Activated naive CD4-positive, alpha-beta T cell treated with anti-CD3 and anti-CD28 coated beads for 36 hours (primary cell): ENCODE measurements at regions of chr2 and their contacts with region 1.

Region 1: DNA sequence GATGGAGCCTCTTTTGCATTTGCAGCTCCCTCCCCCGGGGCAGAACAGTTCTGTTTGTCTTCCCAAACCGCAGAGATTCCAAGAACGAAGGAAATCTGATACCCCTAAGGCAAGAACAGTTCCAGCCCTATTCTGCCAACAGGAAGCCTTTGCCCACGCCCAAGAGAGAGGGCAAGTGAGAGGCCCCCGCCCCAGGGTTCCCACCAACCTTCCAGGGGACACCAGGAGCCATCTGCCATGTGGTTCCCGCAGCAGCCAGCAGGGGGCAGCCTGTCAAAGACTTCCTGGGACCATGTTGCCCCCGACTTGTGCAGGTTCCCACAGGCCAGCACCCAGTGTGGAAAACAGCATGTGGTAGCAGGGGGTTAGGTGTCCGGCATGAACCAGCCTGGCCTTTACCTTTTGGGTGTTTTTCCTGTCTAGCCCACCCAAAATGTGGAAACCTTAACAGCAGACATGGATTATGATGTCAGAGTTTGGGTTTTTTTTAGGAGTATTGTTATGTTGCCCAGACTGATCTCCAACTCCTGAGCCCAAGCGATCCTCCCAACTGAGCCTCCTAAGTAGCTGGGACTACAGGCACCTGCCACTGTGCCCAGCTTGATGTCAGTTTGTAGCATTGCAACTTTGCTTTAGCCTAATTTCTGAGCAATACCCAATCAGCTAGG is 21.7 kb upstream of the EFHD1 start:
- DNase-seq: peak; percentile 79
- H3K4me3 Mint-ChIP-seq: no peak overlapping the region
- H3K27ac Mint-ChIP-seq: no peak overlapping the region
- H3K4me1 Mint-ChIP-seq: no peaks in the 10 kb centered on the region
- H3K27me3 Mint-ChIP-seq: no peaks in the 10 kb centered on the region

Region 2: GRCh38 chr2:232204457-232204931 is 407.2 kb before region 1 on chr2:
- CTCF ChIA-PET with region 1: no interaction called
- intact Hi-C with region 1: no loop called
- DNase-seq: no peak
- H3K4me3 Mint-ChIP-seq: no peak overlapping the region
- H3K27ac Mint-ChIP-seq: no peak overlapping the region
- H3K4me1 Mint-ChIP-seq: no peaks in the 10 kb centered on the region
- H3K27me3 Mint-ChIP-seq: no peaks in the 10 kb centered on the region

Region 3: DNA sequence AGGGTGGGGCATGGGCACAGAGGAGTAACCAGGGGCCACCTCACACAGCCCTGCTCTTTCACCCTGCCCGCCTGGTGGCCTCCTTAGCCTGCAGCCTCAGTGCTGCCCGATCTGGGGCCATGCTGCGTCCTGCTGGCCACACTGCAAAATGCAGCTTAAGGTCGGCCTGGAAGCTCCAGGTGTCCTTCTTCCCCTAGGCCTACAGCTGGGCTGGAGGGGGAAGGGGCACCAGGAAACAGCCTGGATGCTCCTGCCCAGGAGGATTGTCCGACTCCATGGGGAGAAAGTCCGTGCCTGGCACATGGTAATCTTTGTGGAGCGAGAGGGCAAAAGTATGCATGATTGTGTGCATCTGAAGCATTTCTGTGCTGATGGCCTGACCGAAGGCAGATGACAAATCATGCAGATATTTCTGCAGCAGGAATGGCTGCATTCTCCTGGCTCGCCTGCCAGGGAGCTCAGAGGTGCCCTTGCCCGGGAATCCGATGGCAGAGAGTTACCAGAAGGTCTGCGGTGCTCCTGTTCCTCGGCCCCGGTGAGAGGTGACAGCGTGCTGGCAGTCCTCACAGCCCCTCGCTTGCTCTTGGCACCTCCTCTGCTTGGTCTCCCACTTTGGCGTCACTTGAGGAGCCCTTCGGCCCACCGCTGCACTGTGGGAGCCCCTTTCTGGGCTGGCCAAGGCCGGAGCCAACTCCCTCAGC is 245.9 kb before region 1 on chr2:
- CTCF ChIA-PET with region 1: no interaction called
- intact Hi-C with region 1: no loop called
- DNase-seq: peak; percentile 23
- H3K4me3 Mint-ChIP-seq: no peak overlapping the region
- H3K27ac Mint-ChIP-seq: no peak overlapping the region
- H3K4me1 Mint-ChIP-seq: peaks cover 24% of the 10 kb centered on the region
- H3K27me3 Mint-ChIP-seq: no peaks in the 10 kb centered on the region

Region 4: GRCh38 chr2:232668805-232669444 is 57.2 kb after region 1 on chr2:
- CTCF ChIA-PET with region 1: interaction called, 4 read pairs
- intact Hi-C with region 1: loop called (anchors 2 kb)
- DNase-seq: peak; percentile 15
- H3K4me3 Mint-ChIP-seq: no peak overlapping the region
- H3K27ac Mint-ChIP-seq: no peak overlapping the region
- H3K4me1 Mint-ChIP-seq: no peaks in the 10 kb centered on the region
- H3K27me3 Mint-ChIP-seq: no peaks in the 10 kb centered on the region

Region 5: DNA sequence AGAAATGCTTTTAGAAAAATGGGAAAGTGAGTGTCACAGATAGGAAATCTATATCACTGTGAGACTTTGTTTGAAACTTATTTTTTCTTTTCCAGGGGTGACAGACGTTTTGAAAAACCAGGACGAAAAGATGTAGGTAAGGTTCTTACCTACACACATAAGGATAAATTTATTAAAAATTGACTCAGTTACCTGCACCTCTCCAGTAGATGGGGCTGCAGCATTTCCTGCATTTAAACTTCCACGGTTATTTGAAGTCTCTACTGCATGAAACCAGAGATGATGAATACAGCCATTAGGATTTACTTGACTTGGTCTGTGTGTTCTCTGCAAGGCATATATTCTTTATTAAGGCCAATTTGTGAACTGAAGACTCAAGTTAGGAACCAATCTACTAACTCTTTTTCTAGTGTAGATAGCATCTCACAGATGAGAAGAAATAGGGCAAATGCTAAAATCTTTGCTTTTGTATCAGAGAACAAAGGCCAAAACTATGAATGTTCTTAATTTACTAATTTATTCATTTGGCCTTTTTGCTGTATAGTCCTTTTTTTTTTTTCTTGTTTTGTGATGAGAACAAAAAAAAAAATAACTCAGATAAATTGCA is 149.7 kb after region 1 on chr2:
- CTCF ChIA-PET with region 1: no interaction called
- intact Hi-C with region 1: loop called (anchors 5 kb)
- DNase-seq: peak; percentile 68
- H3K4me3 Mint-ChIP-seq: no peak overlapping the region
- H3K27ac Mint-ChIP-seq: no peak overlapping the region
- H3K4me1 Mint-ChIP-seq: peaks cover 15% of the 10 kb centered on the region
- H3K27me3 Mint-ChIP-seq: no peaks in the 10 kb centered on the region

Region 6: DNA sequence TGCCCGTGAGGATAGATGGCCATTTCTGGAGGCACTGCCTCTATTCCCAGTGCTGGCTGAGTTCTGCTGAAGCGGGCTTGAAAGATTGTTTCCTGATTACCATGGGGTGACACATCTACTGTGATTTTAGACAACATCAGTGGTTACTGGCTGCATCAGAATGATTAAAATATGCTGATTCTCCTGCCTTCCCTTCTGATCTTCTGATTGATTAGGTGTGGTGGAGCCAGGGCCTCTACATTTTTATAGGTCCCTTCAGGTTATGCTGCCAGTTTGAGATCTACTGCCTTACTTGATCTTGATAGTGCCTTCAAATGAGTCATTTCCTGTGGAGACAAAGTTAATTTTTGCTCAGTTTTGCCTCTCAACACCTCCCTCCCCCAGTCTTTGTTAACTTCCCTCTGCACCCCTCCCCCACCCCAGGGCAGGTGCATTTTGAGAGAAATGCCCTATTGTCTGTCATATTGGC is 226.8 kb after region 1 on chr2:
- CTCF ChIA-PET with region 1: no interaction called
- intact Hi-C with region 1: no loop called
- DNase-seq: peak; percentile 83
- H3K4me3 Mint-ChIP-seq: peak overlapping the region; percentile 28
- H3K27ac Mint-ChIP-seq: peak overlapping the region; percentile 84
- H3K4me1 Mint-ChIP-seq: peaks cover 25% of the 10 kb centered on the region
- H3K27me3 Mint-ChIP-seq: no peaks in the 10 kb centered on the region

Region 7: DNA sequence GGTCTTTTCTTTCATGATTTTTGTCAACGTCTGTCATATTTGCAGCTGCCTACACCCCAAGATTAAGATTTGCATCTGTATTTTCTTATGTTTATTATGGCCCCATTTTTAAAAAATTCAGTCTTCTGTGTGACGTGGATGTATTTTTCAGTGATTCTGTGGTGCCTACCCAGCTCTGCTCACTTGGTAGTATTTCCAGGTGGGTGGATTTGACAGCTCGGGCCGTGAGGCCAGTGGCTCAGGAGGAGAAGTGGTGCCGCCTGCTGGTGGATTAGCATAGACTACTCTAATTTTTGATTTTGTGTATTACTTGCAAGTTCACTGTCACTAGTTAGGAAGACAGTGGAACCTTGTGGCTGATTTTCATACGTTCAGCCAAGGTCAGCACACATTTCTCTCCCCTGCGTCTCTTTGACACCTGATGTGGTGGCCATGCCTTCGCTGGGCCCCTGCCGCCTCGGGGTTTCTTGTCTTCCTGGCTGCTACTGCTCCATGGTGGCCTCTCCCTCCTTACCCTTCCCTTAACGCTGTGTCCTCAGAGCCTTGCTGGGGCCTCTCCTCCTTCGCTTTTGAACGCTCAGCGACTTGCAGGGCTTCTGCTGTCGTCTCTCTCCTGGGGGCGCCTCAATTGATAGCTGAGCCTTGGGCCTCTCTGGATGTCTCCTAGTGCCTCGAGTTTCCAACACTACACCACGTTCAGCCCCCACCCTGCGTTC is 831.9 kb after region 1 on chr2:
- CTCF ChIA-PET with region 1: no interaction called
- intact Hi-C with region 1: loop called (anchors 5 kb)
- DNase-seq: peak; percentile 91
- H3K4me3 Mint-ChIP-seq: no peak overlapping the region
- H3K27ac Mint-ChIP-seq: peak overlapping the region; percentile 30
- H3K4me1 Mint-ChIP-seq: peaks cover 16% of the 10 kb centered on the region
- H3K27me3 Mint-ChIP-seq: no peaks in the 10 kb centered on the region